Breast epithelium (tissue), 4 donors: ENCODE measurements at regions of chr1 and their contacts with region 1.

Region 1: DNA sequence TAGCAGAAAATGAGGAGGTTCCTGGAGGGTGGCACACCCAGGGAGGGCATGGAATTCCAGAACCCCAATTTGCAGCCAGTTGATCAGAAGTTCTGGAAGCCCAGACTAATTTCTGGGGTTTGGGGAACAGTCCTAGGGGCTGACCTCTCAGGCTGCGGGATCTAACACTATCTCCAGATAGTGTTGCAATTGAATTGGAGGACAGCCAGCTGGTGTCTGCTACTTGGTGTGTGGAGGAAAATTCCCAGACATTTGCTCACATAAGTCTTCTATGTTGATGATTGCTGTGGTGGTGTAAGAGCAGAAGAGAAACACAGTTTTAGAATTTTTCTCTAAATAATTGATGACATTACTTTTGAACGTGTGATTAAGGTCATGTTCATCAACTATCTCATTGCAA is 154.3 kb upstream of the RNPC3 start:
- DNase-seq: no peak
- H3K4me3 ChIP-seq: no peak overlapping the region
- H3K27ac ChIP-seq: no peak overlapping the region
- H3K4me1 ChIP-seq: no peaks in the 10 kb centered on the region
- H3K27me3 ChIP-seq: no peaks in the 10 kb centered on the region
- CTCF ChIP-seq: no peak
- POLR2A ChIP-seq: no peak

Region 2: GRCh38 chr1:102852613-102853012 is 518.6 kb before region 1 on chr1:
- intact Hi-C with region 1: loop called (anchors 5 kb)
- DNase-seq: no peak
- H3K4me3 ChIP-seq: no peak overlapping the region
- H3K27ac ChIP-seq: no peak overlapping the region
- H3K4me1 ChIP-seq: no peaks in the 10 kb centered on the region
- H3K27me3 ChIP-seq: no peaks in the 10 kb centered on the region
- CTCF ChIP-seq: no peak
- POLR2A ChIP-seq: no peak

Region 3: DNA sequence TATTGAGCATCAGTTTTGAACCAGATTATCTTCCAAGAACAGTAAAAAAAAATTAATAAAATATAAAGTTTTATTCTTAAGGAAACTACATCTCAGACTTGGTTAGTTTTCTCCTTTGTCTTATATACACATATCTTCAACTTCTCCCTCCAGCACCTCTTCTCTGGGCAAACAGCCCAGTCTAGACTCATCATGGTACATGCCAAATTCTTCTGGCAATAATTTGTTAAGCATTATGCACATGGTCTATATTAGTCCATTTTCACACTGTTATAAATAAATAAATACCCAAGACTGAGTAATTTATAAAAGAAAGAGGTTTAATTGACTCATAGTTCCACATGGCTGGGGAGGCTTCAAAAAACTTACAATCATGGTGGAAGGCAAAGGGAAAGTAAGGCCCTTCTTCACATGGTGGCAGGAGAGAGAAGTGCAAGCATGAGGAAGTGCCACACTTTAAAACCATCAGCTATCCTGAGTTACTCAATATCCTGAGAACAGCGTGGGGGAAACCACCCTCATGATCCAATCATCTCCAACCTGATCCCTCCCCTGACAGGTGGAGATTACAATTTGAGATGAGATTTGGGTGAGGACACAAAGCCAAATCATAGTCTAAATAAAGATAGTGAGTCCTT is 45.6 kb after region 1 on chr1:
- intact Hi-C with region 1: no loop called
- DNase-seq: no peak
- H3K4me3 ChIP-seq: no peak overlapping the region
- H3K27ac ChIP-seq: no peak overlapping the region
- H3K4me1 ChIP-seq: no peaks in the 10 kb centered on the region
- H3K27me3 ChIP-seq: no peaks in the 10 kb centered on the region
- CTCF ChIP-seq: no peak
- POLR2A ChIP-seq: no peak